Tibial artery (tissue), 4 donors: ENCODE measurements at regions of chr21 and their contacts with region 1.

Region 1: GRCh38 chr21:31265366-31266013 is 78.6 kb downstream of the TIAM1 start:
- DNase-seq: no peak
- H3K4me3 ChIP-seq: no peak overlapping the region
- H3K27ac ChIP-seq: no peak overlapping the region
- H3K4me1 ChIP-seq: no peaks in the 10 kb centered on the region
- H3K27me3 ChIP-seq: no peaks in the 10 kb centered on the region
- CTCF ChIP-seq: no peak

Region 2: GRCh38 chr21:29689753-29690152 is 1575.7 kb before region 1 on chr21:
- intact Hi-C with region 1: loop called (anchors 10 kb)
- DNase-seq: no peak
- H3K4me3 ChIP-seq: no peak overlapping the region
- H3K27ac ChIP-seq: no peak overlapping the region
- H3K4me1 ChIP-seq: no peaks in the 10 kb centered on the region
- H3K27me3 ChIP-seq: no peaks in the 10 kb centered on the region
- CTCF ChIP-seq: no peak